ENCODE measurements at regions of chr15 and their contacts with region 1.

Region 1: GRCh38 chr15:45198337-45199135 is 10.8 kb upstream of the SHF start:
- DNase-seq: peak; percentile 94
- ATAC-seq: peak; percentile 63
- H3K4me3 Mint-ChIP-seq: no peak overlapping the region
- H3K27ac Mint-ChIP-seq: no peak overlapping the region
- H3K4me1 Mint-ChIP-seq: peaks cover 14% of the 10 kb centered on the region
- H3K27me3 Mint-ChIP-seq: no peaks in the 10 kb centered on the region

Region 2: DNA sequence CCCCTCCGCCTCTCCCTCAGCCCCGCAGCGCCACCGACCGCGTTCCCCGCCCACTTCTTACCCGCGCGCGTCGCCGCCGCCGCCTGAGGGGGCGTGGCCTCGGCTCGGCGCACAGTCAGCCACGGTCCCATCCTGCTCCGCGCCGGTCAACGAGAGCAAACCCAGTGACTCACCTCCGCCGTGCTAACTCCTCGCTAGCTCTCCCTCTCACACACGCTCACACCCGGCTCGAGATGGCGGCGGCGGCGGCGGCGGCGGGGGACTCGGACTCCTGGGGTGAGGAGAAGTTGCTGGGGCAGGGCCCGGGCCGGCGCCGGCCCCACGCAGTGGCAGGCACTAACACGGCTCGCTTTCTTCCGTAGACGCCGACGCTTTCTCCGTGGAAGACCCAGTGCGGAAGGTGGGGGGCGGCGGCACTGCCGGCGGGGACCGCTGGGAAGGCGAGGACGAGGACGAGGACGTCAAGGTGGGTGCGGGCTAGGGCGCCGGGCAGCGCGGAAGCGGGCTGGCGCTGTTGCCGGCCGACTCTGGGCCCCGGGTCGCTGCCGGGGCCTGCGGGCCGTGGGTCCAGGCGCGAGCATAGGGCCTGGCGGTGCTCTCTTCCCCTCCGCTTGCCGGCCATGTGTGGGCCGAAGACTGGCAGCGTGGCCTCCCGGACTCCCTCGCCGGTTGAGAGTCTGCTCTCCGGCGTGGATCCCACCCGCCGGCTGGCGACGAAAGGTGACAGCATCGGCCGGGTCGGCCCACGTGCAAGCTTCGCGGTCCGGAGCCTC is 661.4 kb before region 1 on chr15 and contains the start of gene EIF3J:
- CTCF ChIA-PET with region 1: no interaction called
- POLR2A ChIA-PET with region 1: no interaction called
- intact Hi-C with region 1: loop called in 1 of 2 experiments (anchors 5 kb)
- DNase-seq: peak; percentile 97
- ATAC-seq: peak; percentile 95
- H3K4me3 Mint-ChIP-seq: peak within 1 kb of the TSS; percentile 75
- H3K27ac Mint-ChIP-seq: peak within 1 kb of the TSS; percentile 95
- H3K4me1 Mint-ChIP-seq: peaks cover 45% of the 10 kb centered on the region
- H3K27me3 Mint-ChIP-seq: no peaks in the 10 kb centered on the region
- total RNA-seq, gene EIF3J: 106 to 143 TPM

Region 3: GRCh38 chr15:44788748-44789147 is 409.8 kb before region 1 on chr15:
- CTCF ChIA-PET with region 1: no interaction called
- POLR2A ChIA-PET with region 1: no interaction called
- intact Hi-C with region 1: no loop called
- DNase-seq: peak; percentile 76
- ATAC-seq: peak; percentile 86
- H3K4me3 Mint-ChIP-seq: no peak overlapping the region
- H3K27ac Mint-ChIP-seq: peak overlapping the region; percentile 79
- H3K4me1 Mint-ChIP-seq: peaks cover 29% of the 10 kb centered on the region
- H3K27me3 Mint-ChIP-seq: no peaks in the 10 kb centered on the region

Region 4: DNA sequence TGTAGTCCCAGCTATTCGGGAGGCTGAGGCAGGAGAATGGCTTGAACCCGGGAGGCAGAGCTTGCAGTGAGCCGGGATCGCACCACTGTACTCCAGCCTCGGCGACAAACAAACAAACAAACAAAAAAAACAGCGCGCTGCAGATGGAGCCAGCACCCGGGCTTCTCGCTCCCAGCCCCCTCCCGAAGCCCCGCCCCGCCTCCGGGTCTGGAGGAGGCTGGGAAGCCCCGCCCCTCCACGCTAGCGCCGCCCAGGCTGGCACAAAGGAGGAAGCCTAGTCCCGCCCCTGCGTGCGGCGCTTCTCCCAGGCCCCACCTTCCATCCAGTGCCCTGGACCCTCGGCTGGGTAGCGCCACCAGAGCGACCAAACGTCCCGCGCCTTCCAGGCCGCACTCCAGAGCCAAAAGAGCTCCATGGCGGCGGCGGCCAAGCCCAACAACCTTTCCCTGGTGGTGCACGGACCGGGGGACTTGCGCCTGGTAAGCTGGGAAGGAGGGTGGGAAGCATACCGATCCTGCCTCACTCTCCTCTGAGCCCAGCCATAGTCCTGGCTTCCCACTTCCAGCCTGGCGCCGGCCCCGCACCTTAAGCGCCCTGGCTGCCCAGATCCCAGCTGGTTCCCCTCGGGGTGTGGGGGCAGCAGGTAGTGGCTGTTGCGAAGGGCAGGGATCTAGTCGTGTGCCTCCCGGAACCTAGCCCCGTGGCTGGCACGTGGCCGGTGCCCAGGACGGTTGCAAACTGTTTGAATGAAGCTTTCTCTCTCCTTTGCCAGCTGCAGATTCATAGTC is 175.5 kb before region 1 on chr15 and contains the start of gene SORD:
- CTCF ChIA-PET with region 1: no interaction called
- POLR2A ChIA-PET with region 1: no interaction called
- intact Hi-C with region 1: loop called in 1 of 2 experiments (anchors 2 kb)
- DNase-seq: peak; percentile 96
- ATAC-seq: peak; percentile 99
- H3K4me3 Mint-ChIP-seq: peak within 1 kb of the TSS; percentile 83
- H3K27ac Mint-ChIP-seq: peak within 1 kb of the TSS; percentile 74
- H3K4me1 Mint-ChIP-seq: peaks cover 23% of the 10 kb centered on the region
- H3K27me3 Mint-ChIP-seq: peaks cover 16% of the 10 kb centered on the region
- total RNA-seq, gene SORD: 17.1 to 17.7 TPM

Region 5: GRCh38 chr15:45187894-45188830 is 10.4 kb before region 1 on chr15 and contains the start of gene SHF:
- CTCF ChIA-PET with region 1: interaction called, 20 read pairs
- POLR2A ChIA-PET with region 1: interaction called, 15 read pairs
- intact Hi-C with region 1: loop called (anchors 1 kb)
- DNase-seq: peak; percentile 90
- ATAC-seq: peak; percentile 82
- H3K4me3 Mint-ChIP-seq: peak within 1 kb of the TSS; percentile 85
- H3K27ac Mint-ChIP-seq: peak within 1 kb of the TSS; percentile 98
- H3K4me1 Mint-ChIP-seq: peaks cover 28% of the 10 kb centered on the region
- H3K27me3 Mint-ChIP-seq: no peaks in the 10 kb centered on the region
- total RNA-seq, gene SHF: 17.9 to 18.7 TPM

Region 6: GRCh38 chr15:45522328-45523160 is 324.0 kb after region 1 on chr15 and contains the start of gene SLC30A4:
- CTCF ChIA-PET with region 1: no interaction called
- POLR2A ChIA-PET with region 1: no interaction called
- intact Hi-C with region 1: loop called in 1 of 2 experiments (anchors 2 kb)
- DNase-seq: peak; percentile 65
- ATAC-seq: peak; percentile 90
- H3K4me3 Mint-ChIP-seq: peak within 1 kb of the TSS; percentile 89
- H3K27ac Mint-ChIP-seq: peak within 1 kb of the TSS; percentile 67
- H3K4me1 Mint-ChIP-seq: peaks cover 17% of the 10 kb centered on the region
- H3K27me3 Mint-ChIP-seq: peaks cover 2% of the 10 kb centered on the region
- total RNA-seq, gene SLC30A4: 1.6 to 1.9 TPM

Region 7: DNA sequence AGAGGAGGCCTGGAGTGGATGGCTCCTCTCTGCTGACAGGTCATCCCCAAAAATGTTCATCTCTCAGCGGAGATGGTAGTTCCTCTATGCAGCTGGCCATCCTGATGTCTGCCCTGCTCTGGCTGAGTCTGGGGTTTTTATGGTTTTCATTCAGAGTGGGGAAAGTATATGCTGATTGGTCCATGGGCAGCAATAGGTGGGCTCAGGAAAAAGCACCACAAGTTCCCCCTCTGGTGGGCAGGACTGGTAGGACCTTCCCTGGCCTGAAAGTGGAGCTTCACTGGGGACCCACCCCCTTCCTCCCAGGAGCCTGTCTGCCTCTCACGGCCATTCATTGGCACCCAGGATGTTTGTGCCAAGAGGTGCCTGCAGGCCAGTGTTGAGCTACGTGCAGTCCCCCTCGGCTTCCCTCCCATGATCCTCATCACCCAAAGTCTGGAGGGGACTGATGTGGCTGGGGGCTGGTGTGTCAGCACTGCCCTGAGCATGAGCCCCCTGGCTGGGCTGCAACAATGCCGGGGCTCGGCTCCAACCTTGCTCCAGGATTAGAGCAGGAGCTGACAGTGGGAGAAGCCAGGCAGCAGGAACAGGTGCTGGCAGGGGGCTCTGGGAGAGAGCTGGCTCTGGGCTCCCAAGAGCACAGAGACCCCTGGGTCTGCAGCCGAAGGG is 375.6 kb after region 1 on chr15:
- CTCF ChIA-PET with region 1: no interaction called
- POLR2A ChIA-PET with region 1: no interaction called
- intact Hi-C with region 1: no loop called
- DNase-seq: peak; percentile 34
- ATAC-seq: peak; percentile 47
- H3K4me3 Mint-ChIP-seq: no peak overlapping the region
- H3K27ac Mint-ChIP-seq: no peak overlapping the region
- H3K4me1 Mint-ChIP-seq: no peaks in the 10 kb centered on the region
- H3K27me3 Mint-ChIP-seq: peaks cover 14% of the 10 kb centered on the region

Region 8: GRCh38 chr15:45634442-45635190 is 436.1 kb after region 1 on chr15 and contains the start of gene SQOR:
- CTCF ChIA-PET with region 1: no interaction called
- POLR2A ChIA-PET with region 1: no interaction called
- intact Hi-C with region 1: loop called in 1 of 2 experiments (anchors 1 kb)
- DNase-seq: peak; percentile 86
- ATAC-seq: peak; percentile 66
- H3K4me3 Mint-ChIP-seq: peak within 1 kb of the TSS; percentile 96
- H3K27ac Mint-ChIP-seq: peak within 1 kb of the TSS; percentile 90
- H3K4me1 Mint-ChIP-seq: peaks cover 32% of the 10 kb centered on the region
- H3K27me3 Mint-ChIP-seq: no peaks in the 10 kb centered on the region
- total RNA-seq, gene SQOR: 105 to 108 TPM

Measured in activated CD4-positive, alpha-beta T cell treated with anti-CD3 and anti-CD28 coated beads for 36 hours (primary cell).